IMR-90 (cell line): ENCODE measurements at regions of chr19 and their contacts with region 1.

Region 1: GRCh38 chr19:50922317-50922853 is 11.2 kb upstream of the KLK4 start:
- DNase-seq: peak; percentile 67
- ATAC-seq: peak; percentile 98
- H3K4me3 ChIP-seq: no peak overlapping the region
- H3K27ac ChIP-seq: no peak overlapping the region
- H3K4me1 ChIP-seq: no peaks in the 10 kb centered on the region
- H3K27me3 ChIP-seq: no peaks in the 10 kb centered on the region; the same call in 1 of the 2 replicates
- CTCF ChIP-seq: peak; percentile 82
- POLR2A ChIP-seq: no peak
- RAD21 ChIP-seq: peak; percentile 89

Region 2: GRCh38 chr19:50368649-50369570 is 553.5 kb before region 1 on chr19:
- CTCF ChIA-PET with region 1: interaction called, 3 read pairs
- POLR2A ChIA-PET with region 1: no interaction called
- dilution Hi-C with region 1: no loop called
- in situ Hi-C with region 1: loop called (anchors 10 kb)
- intact Hi-C with region 1: no loop called
- DNase-seq: peak; percentile 83
- ATAC-seq: peak; percentile 95
- H3K4me3 ChIP-seq: peak overlapping the region; percentile 63
- H3K27ac ChIP-seq: peak overlapping the region; percentile 78
- H3K4me1 ChIP-seq: no peaks in the 10 kb centered on the region
- H3K27me3 ChIP-seq: no peaks in the 10 kb centered on the region
- CTCF ChIP-seq: peak; percentile 84
- POLR2A ChIP-seq: no peak
- RAD21 ChIP-seq: peak; percentile 85

Region 3: DNA sequence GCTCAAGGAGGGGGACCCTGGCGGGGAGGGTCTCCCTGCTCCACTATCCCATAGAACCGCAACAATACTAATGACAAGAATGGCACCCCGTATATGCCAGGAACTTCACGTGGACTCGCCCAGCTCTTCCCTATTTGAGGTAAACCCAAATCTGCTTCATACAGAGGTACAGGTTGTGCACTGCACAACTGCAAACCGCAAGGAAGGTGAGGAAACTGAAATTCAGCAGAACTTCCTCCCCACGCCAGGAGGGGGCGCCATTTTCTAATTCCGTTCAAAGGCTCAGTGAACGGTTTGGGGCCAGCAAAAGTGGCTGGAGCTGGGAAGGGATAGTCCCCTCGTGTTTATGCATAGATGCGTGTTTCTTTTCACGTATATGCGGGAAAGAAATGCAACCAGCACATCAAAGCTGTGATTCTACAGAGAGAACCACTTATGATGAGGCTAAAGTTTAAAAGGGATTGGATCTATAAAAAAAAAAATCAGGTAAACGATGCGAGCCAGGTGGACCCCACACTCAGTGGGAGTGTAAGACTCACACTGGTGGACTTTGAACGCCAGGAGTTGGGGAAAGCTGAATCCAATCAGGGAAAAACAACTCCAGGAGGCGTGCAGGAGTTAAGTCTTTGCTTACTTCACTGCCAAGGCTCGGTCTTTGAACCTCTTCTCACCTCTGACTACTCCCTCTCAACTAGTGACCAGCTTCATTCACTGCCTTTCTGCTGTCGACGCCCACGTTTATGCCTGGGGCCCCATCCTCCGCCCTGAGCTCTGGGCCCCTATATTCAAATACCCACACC is 252.9 kb before region 1 on chr19:
- CTCF ChIA-PET with region 1: interaction called, 8 read pairs
- POLR2A ChIA-PET with region 1: no interaction called
- dilution Hi-C with region 1: no loop called
- in situ Hi-C with region 1: no loop called
- intact Hi-C with region 1: loop called (anchors 1 kb)
- DNase-seq: peak; percentile 15
- ATAC-seq: peak; percentile 64
- H3K4me3 ChIP-seq: no peak overlapping the region
- H3K27ac ChIP-seq: no peak overlapping the region
- H3K4me1 ChIP-seq: peaks cover 2% of the 10 kb centered on the region
- H3K27me3 ChIP-seq: peaks cover 57% of the 10 kb centered on the region
- CTCF ChIP-seq: peak; percentile 75
- POLR2A ChIP-seq: no peak
- RAD21 ChIP-seq: peak; percentile 56

Region 4: GRCh38 chr19:50804420-50805272 is 117.7 kb before region 1 on chr19:
- CTCF ChIA-PET with region 1: no interaction called
- POLR2A ChIA-PET with region 1: no interaction called
- dilution Hi-C with region 1: no loop called
- in situ Hi-C with region 1: no loop called
- intact Hi-C with region 1: loop called (anchors 10 kb)
- DNase-seq: peak; percentile 99
- ATAC-seq: peak; percentile 97
- H3K4me3 ChIP-seq: peak overlapping the region; percentile 61
- H3K27ac ChIP-seq: peak overlapping the region; percentile 98
- H3K4me1 ChIP-seq: peaks cover 3% of the 10 kb centered on the region; the same call in 1 of the 2 replicates
- H3K27me3 ChIP-seq: no peaks in the 10 kb centered on the region
- CTCF ChIP-seq: no peak
- POLR2A ChIP-seq: peak; percentile 99
- RAD21 ChIP-seq: no peak

Region 5: GRCh38 chr19:51541458-51542357 is 619.3 kb after region 1 on chr19:
- CTCF ChIA-PET with region 1: no interaction called
- POLR2A ChIA-PET with region 1: no interaction called
- dilution Hi-C with region 1: no loop called
- in situ Hi-C with region 1: no loop called
- intact Hi-C with region 1: no loop called
- DNase-seq: no peak
- ATAC-seq: no peak
- H3K4me3 ChIP-seq: no peak overlapping the region
- H3K27ac ChIP-seq: no peak overlapping the region
- H3K4me1 ChIP-seq: no peaks in the 10 kb centered on the region
- H3K27me3 ChIP-seq: no peaks in the 10 kb centered on the region
- CTCF ChIP-seq: no peak
- POLR2A ChIP-seq: no peak
- RAD21 ChIP-seq: no peak